CD8-positive, alpha-beta memory T cell (primary cell): ENCODE measurements at regions of chr1 and their contacts with region 1.

Region 1: DNA sequence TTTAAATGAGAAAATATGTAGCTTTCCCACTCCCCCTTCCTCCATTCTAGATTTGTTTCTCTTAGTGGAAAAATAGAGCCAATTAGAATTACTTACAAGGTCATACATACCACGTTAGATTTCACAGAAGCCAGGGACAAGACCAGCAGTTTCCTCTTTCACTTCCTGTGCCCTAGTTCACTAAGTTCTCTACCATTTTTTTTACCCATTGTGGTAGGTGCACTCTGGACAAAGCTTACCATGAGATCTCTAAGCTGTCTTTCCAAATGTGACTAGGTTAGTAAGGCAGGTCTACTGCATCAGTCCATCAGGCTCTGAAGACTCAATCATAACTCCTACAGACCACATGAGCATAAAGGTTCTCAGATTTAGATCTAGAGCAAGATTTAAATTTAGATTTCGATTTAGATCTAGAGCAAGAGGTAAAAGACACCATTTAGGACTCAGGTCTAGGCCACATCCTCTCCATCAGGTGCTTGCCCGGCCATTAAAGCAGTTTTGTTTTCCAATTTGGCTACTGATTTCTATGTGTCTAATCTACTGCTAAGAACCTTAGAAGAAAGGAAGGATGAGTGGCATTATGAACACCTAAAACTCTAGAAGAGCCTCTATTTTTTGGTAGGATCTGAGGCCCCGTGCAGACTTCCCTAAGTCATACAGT is 235.3 kb downstream of the FAF1 start:
- DNase-seq: no peak
- H3K4me3 ChIP-seq: no peak overlapping the region
- H3K4me3 Mint-ChIP-seq: peak overlapping the region; percentile 2 to 73 (median 46)
- H3K27ac ChIP-seq: no peak overlapping the region
- H3K27ac Mint-ChIP-seq: peak overlapping the region; percentile 32 to 96 (median 82)
- H3K4me1 ChIP-seq: peaks cover 18% of the 10 kb centered on the region
- H3K4me1 Mint-ChIP-seq: peaks cover 31 to 35% (median 33%) of the 10 kb centered on the region in 3 donors
- H3K27me3 ChIP-seq: no peaks in the 10 kb centered on the region
- H3K27me3 Mint-ChIP-seq: no peaks in the 10 kb centered on the region

Region 2: DNA sequence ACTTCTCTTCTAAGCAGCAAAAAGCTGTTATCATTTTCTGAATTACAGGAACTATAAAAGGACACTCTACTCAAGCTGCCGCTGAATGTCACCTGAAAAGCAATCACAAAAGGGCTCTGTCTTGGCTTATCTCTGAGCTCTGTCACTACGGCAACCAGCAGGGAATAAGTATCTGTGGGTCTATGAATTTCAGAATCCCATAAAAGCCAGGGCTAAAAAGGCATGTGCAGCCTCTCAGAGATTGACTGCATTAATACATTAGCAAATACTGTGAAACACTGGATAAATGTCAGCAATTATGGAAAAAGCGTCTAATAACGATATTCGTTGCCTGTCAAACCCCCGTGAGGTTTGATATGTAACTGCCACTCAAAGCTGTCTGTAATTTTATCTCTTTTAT is 91.3 kb before region 1 on chr1:
- CTCF ChIA-PET with region 1: no interaction called
- POLR2A ChIA-PET with region 1: interaction called, 11 read pairs
- DNase-seq: no peak
- H3K4me3 ChIP-seq: no peak overlapping the region
- H3K4me3 Mint-ChIP-seq: no peak overlapping the region
- H3K27ac ChIP-seq: no peak overlapping the region
- H3K27ac Mint-ChIP-seq: no peak overlapping the region
- H3K4me1 ChIP-seq: no peaks in the 10 kb centered on the region
- H3K4me1 Mint-ChIP-seq: peaks cover 2 to 20% (median 16%) of the 10 kb centered on the region in 3 donors
- H3K27me3 ChIP-seq: no peaks in the 10 kb centered on the region
- H3K27me3 Mint-ChIP-seq: no peaks in the 10 kb centered on the region

Region 3: DNA sequence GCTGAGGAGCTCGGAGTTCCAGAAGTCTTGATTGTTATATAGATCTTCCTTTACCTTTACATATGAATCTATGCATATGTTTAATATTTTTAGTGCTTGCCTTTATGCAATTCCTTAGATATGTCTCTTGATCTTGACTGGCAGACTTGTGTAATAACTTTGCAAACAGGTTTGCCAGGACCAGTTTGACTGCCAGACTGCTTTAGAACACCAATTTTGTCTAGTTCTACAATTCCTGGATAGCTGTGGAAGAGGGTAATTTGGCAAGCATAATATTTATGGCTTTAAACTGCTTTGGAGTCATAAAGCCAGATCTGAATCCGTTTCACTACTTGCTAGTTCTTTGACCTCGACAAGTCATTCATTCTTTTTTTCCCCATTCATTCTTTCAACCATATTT is 14.7 kb before region 1 on chr1:
- CTCF ChIA-PET with region 1: no interaction called
- POLR2A ChIA-PET with region 1: no interaction called
- DNase-seq: no peak
- H3K4me3 ChIP-seq: no peak overlapping the region
- H3K4me3 Mint-ChIP-seq: no peak overlapping the region
- H3K27ac ChIP-seq: no peak overlapping the region
- H3K27ac Mint-ChIP-seq: no peak overlapping the region
- H3K4me1 ChIP-seq: no peaks in the 10 kb centered on the region
- H3K4me1 Mint-ChIP-seq: peaks cover 12 to 17% (median 17%) of the 10 kb centered on the region in 3 donors
- H3K27me3 ChIP-seq: no peaks in the 10 kb centered on the region
- H3K27me3 Mint-ChIP-seq: no peaks in the 10 kb centered on the region